ENCODE measurements at regions of chr5 and their contacts with region 1.

Region 1: GRCh38 chr5:149345147-149345875 is at the start of gene GRPEL2:
- DNase-seq: peak; percentile 92
- H3K4me3 ChIP-seq: peak within 1 kb of the TSS; percentile 94 to 100
- H3K27ac ChIP-seq: peak within 1 kb of the TSS; percentile 70 to 97
- H3K4me1 ChIP-seq: peaks cover 0 to 15% of the 10 kb centered on the region in 2 experiments; a peak in 3 of 4 replicates
- H3K27me3 ChIP-seq: no peaks in the 10 kb centered on the region
- CTCF ChIP-seq: no peak
- EP300 ChIP-seq: no peak
- RAD21 ChIP-seq: no peak
- polyA plus RNA-seq, gene GRPEL2: 4.6 and 6.0 TPM in 2 replicates

Region 2: DNA sequence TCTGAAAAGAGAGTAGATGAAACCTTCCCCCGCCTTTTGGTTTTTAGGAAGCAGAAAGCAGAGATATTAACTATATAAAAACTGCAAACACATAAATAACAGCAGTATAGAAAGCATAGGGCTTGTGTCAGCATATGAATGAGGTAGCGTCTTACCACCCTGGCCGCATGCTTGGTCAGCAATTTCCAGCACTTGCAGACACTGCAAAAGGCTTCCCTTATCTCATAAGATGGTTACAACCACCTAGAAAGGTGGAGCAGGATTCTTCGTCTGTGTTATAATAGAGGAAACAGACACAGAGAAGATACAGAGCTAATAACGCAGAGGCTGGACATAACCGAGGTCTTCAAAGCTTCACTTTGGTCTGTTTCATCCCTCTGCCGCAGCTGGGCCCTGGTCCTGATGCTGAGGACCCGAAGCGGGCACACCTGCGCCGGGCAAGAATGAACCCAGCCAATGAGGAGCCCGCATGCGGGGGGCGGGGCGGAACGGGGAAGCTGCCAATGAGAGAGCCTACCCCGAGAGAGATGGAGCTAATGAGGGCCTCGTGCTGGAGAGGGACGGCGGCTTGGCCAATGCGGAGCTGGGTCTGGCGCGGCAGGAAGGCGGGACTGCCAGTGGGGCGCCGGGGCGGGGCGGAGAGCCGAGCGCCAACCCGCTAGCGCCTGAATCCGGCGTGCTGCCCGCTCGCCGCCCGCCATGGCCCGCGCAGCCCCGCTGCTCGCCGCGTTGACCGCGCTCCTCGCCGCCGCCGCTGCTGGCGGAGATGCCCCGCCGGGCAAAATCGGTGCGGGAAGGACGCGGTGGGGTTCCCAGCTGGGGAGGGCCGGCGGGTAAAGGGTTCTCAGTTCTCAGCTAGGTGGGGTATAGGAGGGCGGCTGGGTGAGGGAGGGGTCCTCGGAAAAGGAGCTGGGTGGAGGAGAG is 12.3 kb after region 1 on chr5 and contains the start of gene PCYOX1L:
- CTCF ChIA-PET with region 1: interaction called, 5 read pairs
- POLR2A ChIA-PET with region 1: interaction called, 38 read pairs
- DNase-seq: peak; percentile 98
- H3K4me3 ChIP-seq: peak within 1 kb of the TSS; percentile 62 to 85
- H3K27ac ChIP-seq: peak within 1 kb of the TSS in 1 of 2 experiments; percentile 84; a peak in 2 of 4 replicates
- H3K4me1 ChIP-seq: peaks cover 0 to 12% of the 10 kb centered on the region in 2 experiments; a peak in 1 of 4 replicates
- H3K27me3 ChIP-seq: no peaks in the 10 kb centered on the region
- CTCF ChIP-seq: no peak
- EP300 ChIP-seq: no peak
- RAD21 ChIP-seq: no peak
- polyA plus RNA-seq, gene PCYOX1L: 17.4 and 17.5 TPM in 2 replicates

Measured in SK-N-SH (cell line).